AG04450 (cell line): ENCODE measurements at regions of chr16 and their contacts with region 1.

Region 1: GRCh38 chr16:57899771-57900661 is 70.9 kb downstream of the CNGB1 start:
- DNase-seq: peak; percentile 33
- H3K4me3 ChIP-seq: no peak overlapping the region
- H3K27ac ChIP-seq: no peak overlapping the region
- H3K27me3 ChIP-seq: peaks cover 17% of the 10 kb centered on the region
- CTCF ChIP-seq: peak; percentile 90

Region 2: GRCh38 chr16:57432989-57433388 is 467.0 kb before region 1 on chr16:
- CTCF ChIA-PET with region 1: no interaction called
- POLR2A ChIA-PET with region 1: no interaction called
- DNase-seq: no peak
- H3K4me3 ChIP-seq: no peak overlapping the region
- H3K27ac ChIP-seq: no peak overlapping the region
- H3K27me3 ChIP-seq: no peaks in the 10 kb centered on the region
- CTCF ChIP-seq: no peak

Region 3: DNA sequence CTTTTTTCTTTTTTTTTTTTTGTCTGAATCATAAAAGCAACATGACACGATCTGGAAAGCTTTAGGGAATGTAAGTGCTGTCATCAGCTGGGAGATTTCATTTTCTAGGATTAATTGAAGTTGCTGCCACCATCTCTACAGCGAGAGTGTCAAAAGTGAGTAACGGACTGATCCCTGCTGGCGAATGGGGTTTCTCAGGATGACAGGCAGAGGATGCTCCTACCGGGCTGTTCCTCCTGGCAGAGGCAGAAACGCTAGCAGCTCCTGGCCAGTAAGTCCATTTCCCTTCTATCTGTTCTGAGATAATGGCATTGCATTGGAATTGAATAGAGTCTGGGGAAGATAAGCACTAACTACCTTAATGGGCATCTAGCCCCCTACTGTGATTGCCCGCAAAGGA is 17.2 kb before region 1 on chr16:
- CTCF ChIA-PET with region 1: interaction called, 10 read pairs
- POLR2A ChIA-PET with region 1: no interaction called
- DNase-seq: no peak
- H3K4me3 ChIP-seq: no peak overlapping the region
- H3K27ac ChIP-seq: no peak overlapping the region
- H3K27me3 ChIP-seq: peaks cover 49% of the 10 kb centered on the region
- CTCF ChIP-seq: no peak

Region 4: DNA sequence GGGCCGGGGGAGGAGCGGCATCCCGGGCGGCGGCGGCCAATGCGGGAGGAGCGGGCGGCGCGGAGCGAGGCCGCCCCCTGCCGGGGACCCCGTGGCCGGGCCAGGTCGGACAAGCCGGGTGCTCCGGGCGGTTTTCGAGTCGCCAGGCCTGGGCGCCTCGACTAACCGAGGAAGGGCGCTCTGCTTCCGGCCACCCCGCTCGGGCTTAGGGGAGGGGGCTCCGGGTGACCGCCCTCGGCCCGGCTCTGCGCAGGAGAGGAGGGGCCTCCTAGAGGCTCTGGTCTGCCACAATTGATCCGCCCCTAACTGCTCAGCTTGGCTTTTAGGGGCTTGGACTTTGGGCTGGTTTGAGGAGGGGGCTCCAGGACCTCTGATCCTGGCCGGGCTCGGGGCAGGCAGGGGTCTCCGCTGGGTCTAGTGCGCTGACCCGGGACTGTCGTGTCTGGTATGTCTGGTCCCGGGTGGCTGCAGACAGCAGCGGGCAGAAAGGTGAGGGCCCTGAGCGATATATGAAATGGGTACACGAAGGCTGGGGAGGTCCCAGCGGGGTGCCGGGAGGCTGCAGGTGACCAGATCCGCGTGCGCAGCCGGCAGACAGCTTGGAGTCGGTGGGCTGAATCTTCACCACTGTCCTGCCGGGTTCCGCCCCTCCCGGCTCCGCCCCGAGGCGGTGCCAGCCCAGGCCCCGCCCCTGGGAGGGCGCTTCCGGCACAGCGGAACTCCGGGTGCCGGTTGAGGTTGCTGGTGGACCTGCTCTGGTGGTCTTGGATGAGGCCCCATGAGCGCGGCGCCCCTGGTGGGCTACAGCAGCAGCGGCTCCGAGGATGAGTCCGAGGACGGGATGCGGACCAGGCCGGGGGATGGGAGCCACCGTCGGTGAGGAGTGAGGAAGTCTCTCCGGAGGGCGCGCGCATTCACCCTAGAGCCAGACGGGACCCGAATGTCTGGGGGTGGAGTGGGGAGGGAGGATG is 101.0 kb after region 1 on chr16 and contains the start of gene USB1:
- CTCF ChIA-PET with region 1: interaction called, 47 read pairs
- POLR2A ChIA-PET with region 1: no interaction called
- DNase-seq: peak; percentile 39
- H3K4me3 ChIP-seq: peak within 1 kb of the TSS; percentile 89
- H3K27ac ChIP-seq: peak within 1 kb of the TSS; percentile 47
- H3K27me3 ChIP-seq: no peaks in the 10 kb centered on the region
- CTCF ChIP-seq: peak; percentile 52
- polyA plus RNA-seq, gene USB1: 48.7 and 57.9 TPM in 2 replicates